ENCODE measurements at regions of chr19 and their contacts with region 1.

Region 1: GRCh38 chr19:16324384-16325160 is at the start of gene KLF2:
- DNase-seq: peak; percentile 85 to 94
- H3K4me3 ChIP-seq: peak within 1 kb of the TSS; percentile 80 to 97 (median 94)
- H3K27ac ChIP-seq: peak within 1 kb of the TSS; percentile 89 to 98
- H3K4me1 ChIP-seq: no peaks in the 10 kb centered on the region
- H3K27me3 ChIP-seq: no peaks in the 10 kb centered on the region
- CTCF ChIP-seq: no peak
- POLR2A ChIP-seq: peak; percentile 43
- total RNA-seq, gene KLF2: 12.0 to 23.3 (median 21.8) TPM

Region 2: DNA sequence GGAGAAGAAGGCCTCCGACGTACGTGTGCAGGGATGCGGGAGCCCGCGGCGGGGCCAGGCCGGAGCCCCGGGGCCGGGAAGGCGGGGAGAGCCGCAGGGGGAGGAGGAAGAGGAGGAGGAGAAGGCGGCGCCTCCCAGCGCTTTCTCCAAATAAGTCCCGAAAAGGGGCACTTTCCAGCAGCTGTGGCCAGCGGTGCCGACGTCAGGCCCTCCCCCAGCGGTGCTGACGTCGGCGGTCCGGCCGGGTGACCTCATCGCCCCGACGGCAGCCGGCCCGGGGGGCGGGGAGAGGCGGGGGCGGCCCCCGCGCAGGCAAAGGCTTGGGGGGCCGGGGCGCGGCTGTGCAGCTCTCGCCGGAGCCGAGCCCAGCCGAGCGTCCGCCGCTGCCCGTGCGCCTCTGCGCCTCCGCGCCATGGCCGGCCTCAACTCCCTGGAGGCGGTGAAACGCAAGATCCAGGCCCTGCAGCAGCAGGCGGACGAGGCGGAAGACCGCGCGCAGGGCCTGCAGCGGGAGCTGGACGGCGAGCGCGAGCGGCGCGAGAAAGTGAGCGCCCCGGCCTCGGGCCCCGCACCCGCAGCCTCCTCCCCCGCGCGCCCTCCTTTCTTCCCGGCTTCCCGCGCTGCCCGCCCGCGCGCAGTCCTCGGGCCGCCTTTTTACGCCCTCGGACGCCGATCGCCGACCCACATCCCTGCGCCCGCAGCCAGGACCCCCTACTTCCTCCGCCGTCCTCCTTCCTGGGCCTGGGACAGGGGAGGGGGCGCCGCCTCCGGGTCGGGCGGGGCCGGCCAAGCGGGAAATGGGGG is 248.2 kb before region 1 on chr19 and contains the start of gene TPM4:
- intact Hi-C with region 1: loop called (anchors 5 kb)
- DNase-seq: peak; percentile 83 to 93
- H3K4me3 ChIP-seq: peak within 1 kb of the TSS; percentile 91 to 99 (median 96)
- H3K27ac ChIP-seq: peak within 1 kb of the TSS; percentile 100
- H3K4me1 ChIP-seq: peaks cover 0 to 3% of the 10 kb centered on the region in 2 donors
- H3K27me3 ChIP-seq: no peaks in the 10 kb centered on the region
- CTCF ChIP-seq: no peak
- POLR2A ChIP-seq: peak; percentile 75
- total RNA-seq, gene TPM4: 257 to 652 (median 430) TPM

Region 3: GRCh38 chr19:16281743-16282142 is 42.8 kb before region 1 on chr19:
- intact Hi-C with region 1: loop called (anchors 1 kb)
- DNase-seq: no peak
- H3K4me3 ChIP-seq: no peak overlapping the region
- H3K27ac ChIP-seq: no peak overlapping the region
- H3K4me1 ChIP-seq: peaks cover 4 to 5% of the 10 kb centered on the region in 2 donors
- H3K27me3 ChIP-seq: no peaks in the 10 kb centered on the region
- CTCF ChIP-seq: no peak
- POLR2A ChIP-seq: no peak

Measured in breast epithelium (tissue), 4 donors.